Gastrocnemius medialis (tissue), 4 donors: ENCODE measurements at regions of chr18 and their contacts with region 1.

Region 1: GRCh38 chr18:47748847-47749599 is 181.4 kb downstream of the SMAD2 start:
- DNase-seq: peak; percentile 46 to 53
- ATAC-seq: peak; percentile 89 to 92
- H3K4me3 ChIP-seq: peak overlapping the region; percentile 41 to 47 (median 45)
- H3K27ac ChIP-seq: no peak overlapping the region
- H3K4me1 ChIP-seq: peaks cover 0 to 3% of the 10 kb centered on the region in 2 donors
- H3K27me3 ChIP-seq: peaks cover 0 to 6% (median 0%) of the 10 kb centered on the region in 3 donors
- CTCF ChIP-seq: peak; percentile 93 to 100 (median 100)
- POLR2A ChIP-seq: no peak

Region 2: DNA sequence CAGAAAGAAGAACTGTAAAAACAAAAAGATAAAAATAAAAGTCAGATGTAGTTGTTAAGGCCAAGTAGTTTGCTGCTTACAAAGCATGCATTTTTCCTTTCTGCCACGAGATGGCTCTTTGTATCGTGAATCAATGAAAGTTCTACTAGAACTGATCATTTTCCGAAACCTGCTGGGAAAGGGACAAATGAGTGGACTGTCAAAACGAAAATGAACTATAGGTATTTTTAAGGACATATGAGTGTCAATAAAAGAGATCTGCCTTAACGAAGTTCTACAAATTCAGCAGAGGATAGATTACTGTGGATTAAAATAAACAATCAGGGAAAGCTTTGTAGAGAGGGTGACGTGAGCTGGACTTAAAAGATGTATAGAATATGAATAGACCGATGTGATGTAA is 698.6 kb before region 1 on chr18:
- in situ Hi-C with region 1: no loop called
- intact Hi-C with region 1: loop called (anchors 2 kb)
- DNase-seq: no peak
- ATAC-seq: no peak
- H3K4me3 ChIP-seq: no peak overlapping the region
- H3K27ac ChIP-seq: no peak overlapping the region
- H3K4me1 ChIP-seq: peaks cover 0 to 11% of the 10 kb centered on the region in 2 donors
- H3K27me3 ChIP-seq: no peaks in the 10 kb centered on the region
- CTCF ChIP-seq: peak; percentile 21 to 62 (median 54)
- POLR2A ChIP-seq: no peak

Region 3: GRCh38 chr18:47100214-47100831 is 648.7 kb before region 1 on chr18:
- in situ Hi-C with region 1: no loop called
- intact Hi-C with region 1: loop called (anchors 1 kb)
- DNase-seq: no peak
- ATAC-seq: peak; percentile 30 to 51
- H3K4me3 ChIP-seq: no peak overlapping the region
- H3K27ac ChIP-seq: no peak overlapping the region
- H3K4me1 ChIP-seq: no peaks in the 10 kb centered on the region
- H3K27me3 ChIP-seq: no peaks in the 10 kb centered on the region
- CTCF ChIP-seq: peak; percentile 54 to 76 (median 66)
- POLR2A ChIP-seq: no peak

Region 4: DNA sequence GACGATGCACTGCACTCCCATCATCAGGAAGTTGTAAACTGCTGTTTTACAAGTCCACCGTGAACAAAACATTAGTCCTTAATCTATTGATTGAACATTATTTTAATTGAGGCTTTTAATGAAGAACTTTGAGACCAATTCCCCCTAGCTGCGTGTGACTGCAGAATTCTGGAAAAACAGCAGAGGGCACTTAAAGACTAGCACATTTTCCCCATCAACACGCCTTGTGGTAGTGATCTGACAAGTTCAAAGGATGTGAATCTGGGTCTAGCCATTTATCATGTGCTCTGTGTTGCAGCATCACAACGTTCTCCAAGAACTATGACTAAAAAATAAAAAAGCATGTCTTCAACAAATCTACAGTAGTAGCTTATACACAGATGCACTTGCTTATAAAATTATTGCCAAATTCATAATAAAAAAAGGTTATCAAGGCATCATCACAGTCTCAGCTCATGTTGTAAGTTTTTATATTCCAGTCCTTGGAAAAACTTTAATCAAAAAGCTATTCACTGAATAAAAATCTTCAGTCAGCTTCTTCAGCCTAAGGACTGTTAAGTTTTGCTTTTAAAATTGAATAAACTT is 533.4 kb before region 1 on chr18:
- in situ Hi-C with region 1: loop called in 3 of 4 experiments (anchors 10 to 25 kb)
- intact Hi-C with region 1: loop called (anchors 5 kb)
- DNase-seq: no peak
- ATAC-seq: no peak
- H3K4me3 ChIP-seq: no peak overlapping the region
- H3K27ac ChIP-seq: no peak overlapping the region
- H3K4me1 ChIP-seq: no peaks in the 10 kb centered on the region
- H3K27me3 ChIP-seq: peaks cover 0 to 16% (median 0%) of the 10 kb centered on the region in 3 donors
- CTCF ChIP-seq: peak in 2 of 5 experiments; percentile 24 to 30
- POLR2A ChIP-seq: no peak

Region 5: DNA sequence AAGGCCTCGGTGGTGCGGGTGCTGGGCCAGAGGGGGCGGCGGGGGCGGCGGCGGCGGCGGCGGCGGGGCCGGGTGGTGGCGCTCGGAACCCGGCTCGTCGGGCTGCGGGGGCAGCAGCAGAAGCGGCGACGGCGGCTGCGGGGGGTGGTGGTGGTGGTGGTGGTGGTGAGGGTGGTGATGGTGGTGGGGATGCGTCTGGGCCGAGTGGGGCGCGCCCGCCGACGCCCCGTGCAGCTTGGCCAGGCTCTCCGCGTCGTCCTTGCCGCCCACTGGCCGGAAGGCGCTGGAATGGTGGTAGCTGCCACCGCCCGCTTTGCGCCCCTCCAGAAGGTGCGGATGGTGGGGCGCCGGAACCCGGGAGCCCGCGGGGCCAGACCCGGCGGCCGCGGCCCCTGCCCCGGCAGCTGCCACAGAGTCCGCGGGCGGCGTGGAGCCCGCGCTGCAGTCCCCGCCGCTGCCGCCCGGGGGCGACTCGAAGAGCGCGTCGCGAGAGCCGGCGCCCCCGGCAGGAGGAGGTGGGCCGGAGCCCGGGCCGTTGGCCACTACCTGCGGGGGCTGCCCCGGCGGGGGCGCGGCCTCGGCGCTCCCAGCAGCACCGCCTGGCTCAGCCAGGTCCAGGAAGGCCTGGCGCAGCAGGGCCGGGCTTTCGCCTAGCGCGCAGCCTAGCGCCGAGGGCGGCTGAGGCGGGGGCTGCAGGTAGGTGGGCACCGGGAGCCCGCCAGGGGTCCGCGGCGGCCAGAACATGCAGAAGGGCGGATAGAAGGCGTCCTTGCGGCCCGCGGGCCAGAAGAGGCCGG is 501.8 kb before region 1 on chr18:
- in situ Hi-C with region 1: loop called in 1 of 4 experiments (anchors 25 kb)
- intact Hi-C with region 1: no loop called
- DNase-seq: no peak
- ATAC-seq: no peak
- H3K4me3 ChIP-seq: no peak overlapping the region
- H3K27ac ChIP-seq: no peak overlapping the region
- H3K4me1 ChIP-seq: no peaks in the 10 kb centered on the region
- H3K27me3 ChIP-seq: peaks cover 64 to 77% (median 65%) of the 10 kb centered on the region in 3 donors
- CTCF ChIP-seq: peak in 2 of 5 experiments; percentile 15 to 34
- POLR2A ChIP-seq: no peak

Region 6: DNA sequence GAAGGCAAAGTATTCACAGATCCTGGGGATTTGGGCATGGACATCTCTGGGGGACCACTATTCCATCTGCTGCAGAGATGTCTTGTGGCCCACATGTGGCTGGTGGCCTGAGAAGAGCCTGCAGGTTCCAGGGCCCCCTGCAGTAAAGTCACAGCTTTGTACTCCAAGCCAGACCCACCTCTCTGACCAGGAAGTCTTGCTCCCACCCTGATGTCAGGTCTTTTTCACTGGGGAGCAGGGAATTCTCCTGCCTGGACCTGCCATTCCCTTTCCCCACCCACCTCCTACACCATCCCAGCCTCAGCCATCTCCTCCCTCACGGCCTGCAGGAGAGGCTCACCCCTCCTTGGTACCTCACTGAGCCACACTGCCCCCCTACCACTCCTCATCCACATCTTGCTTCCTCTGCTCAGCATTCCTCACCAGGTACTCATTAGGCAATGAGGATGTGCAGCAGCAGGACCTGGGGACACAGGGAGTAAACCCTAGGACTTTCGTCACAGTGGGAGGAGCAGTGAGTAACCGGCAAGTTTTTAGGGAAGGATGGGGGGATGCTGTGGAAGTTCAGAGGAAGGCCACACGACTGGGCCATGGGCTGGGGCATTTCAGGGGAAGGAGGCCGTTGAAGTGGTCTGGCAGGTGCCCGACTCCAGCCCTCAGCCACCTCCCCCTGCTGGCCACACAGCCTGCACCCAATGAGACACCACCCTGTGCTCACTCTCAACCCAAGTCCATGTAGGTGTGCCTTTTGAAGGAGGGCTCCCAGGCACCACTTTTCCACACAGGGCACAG is 30.2 kb before region 1 on chr18:
- in situ Hi-C with region 1: no loop called
- intact Hi-C with region 1: no loop called
- DNase-seq: no peak
- ATAC-seq: no peak
- H3K4me3 ChIP-seq: no peak overlapping the region
- H3K27ac ChIP-seq: no peak overlapping the region
- H3K4me1 ChIP-seq: no peaks in the 10 kb centered on the region
- H3K27me3 ChIP-seq: no peaks in the 10 kb centered on the region
- CTCF ChIP-seq: no peak
- POLR2A ChIP-seq: no peak